Endothelial cell of umbilical vein (primary cell): ENCODE measurements at regions of chr2 and their contacts with region 1.

Region 1: GRCh38 chr2:15169326-15170069 is 391.6 kb downstream of the NBAS start:
- DNase-seq: peak; percentile 86
- H3K4me3 ChIP-seq: peak overlapping the region in 1 of 3 experiments; percentile 20
- H3K27ac ChIP-seq: peak overlapping the region; percentile 94
- H3K4me1 ChIP-seq: peaks cover 24% of the 10 kb centered on the region
- H3K27me3 ChIP-seq: no peaks in the 10 kb centered on the region
- CTCF ChIP-seq: no peak
- POLR2A ChIP-seq: no peak

Region 2: DNA sequence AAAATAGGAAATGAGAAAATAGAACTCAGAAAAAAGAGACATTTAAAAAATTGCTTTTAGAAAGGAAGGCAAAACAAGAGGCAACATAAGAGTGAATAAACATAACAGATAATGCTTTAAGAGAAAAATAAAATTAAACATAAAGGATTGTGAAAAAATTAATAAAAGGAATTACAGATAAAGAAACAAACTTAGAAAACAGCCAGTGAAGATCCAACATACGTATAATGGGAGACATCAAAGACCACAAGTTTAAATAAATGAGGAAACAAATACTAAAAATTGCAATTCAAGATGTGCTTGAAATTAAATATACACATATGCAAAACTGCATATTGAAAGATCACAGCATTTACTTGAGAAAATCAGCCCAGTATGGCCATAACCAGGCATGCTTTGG is 57.3 kb before region 1 on chr2:
- CTCF ChIA-PET with region 1: no interaction called
- POLR2A ChIA-PET with region 1: no interaction called
- dilution Hi-C with region 1: no loop called
- intact Hi-C with region 1: no loop called
- DNase-seq: peak; percentile 12
- H3K4me3 ChIP-seq: no peak overlapping the region
- H3K27ac ChIP-seq: no peak overlapping the region
- H3K4me1 ChIP-seq: no peaks in the 10 kb centered on the region
- H3K27me3 ChIP-seq: no peaks in the 10 kb centered on the region
- CTCF ChIP-seq: no peak
- POLR2A ChIP-seq: no peak

Region 3: GRCh38 chr2:15201009-15201408 is 31.5 kb after region 1 on chr2:
- CTCF ChIA-PET with region 1: no interaction called
- POLR2A ChIA-PET with region 1: no interaction called
- dilution Hi-C with region 1: no loop called
- intact Hi-C with region 1: no loop called
- DNase-seq: no peak
- H3K4me3 ChIP-seq: no peak overlapping the region
- H3K27ac ChIP-seq: no peak overlapping the region
- H3K4me1 ChIP-seq: no peaks in the 10 kb centered on the region
- H3K27me3 ChIP-seq: no peaks in the 10 kb centered on the region
- CTCF ChIP-seq: no peak
- POLR2A ChIP-seq: no peak

Region 4: DNA sequence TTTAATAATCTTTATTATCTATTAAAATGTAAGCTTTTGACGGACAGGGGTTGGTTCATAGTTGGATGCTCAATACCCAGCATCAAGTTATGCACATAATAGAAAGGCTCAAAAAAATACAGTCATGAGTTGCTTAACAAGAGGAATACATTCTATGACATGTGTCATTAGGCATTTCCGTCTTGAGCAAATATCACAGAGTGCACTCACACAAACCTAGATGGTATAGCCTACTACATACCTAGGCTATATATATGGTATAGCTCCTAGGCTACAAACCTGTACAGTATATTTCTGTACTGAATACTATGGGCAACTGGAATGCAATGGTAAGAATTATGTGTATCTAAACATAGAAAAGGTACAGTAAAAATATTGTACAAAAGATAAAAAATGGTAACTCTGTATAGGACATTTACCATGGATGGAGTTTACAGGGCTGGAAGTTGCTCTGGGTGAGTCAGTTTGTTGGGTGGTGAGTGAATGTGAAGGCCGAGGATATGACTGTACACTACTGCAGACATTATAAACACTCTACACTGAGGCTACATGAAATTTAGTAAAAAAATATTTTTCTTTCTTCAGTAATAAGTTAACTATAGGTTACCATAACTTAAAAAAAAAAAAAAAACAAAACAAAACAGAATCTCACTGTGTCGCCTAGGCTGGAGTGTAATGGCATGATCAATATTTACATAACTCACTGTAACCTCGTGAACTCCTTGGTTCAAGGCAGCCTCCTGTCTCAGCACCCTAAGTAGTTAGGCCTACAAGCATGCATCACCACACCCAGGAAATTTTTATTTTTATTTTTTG is 190.4 kb after region 1 on chr2:
- CTCF ChIA-PET with region 1: no interaction called
- POLR2A ChIA-PET with region 1: no interaction called
- dilution Hi-C with region 1: no loop called
- intact Hi-C with region 1: loop called (anchors 1 kb)
- DNase-seq: peak; percentile 89
- H3K4me3 ChIP-seq: no peak overlapping the region
- H3K27ac ChIP-seq: peak overlapping the region; percentile 79
- H3K4me1 ChIP-seq: peaks cover 22% of the 10 kb centered on the region
- H3K27me3 ChIP-seq: no peaks in the 10 kb centered on the region
- CTCF ChIP-seq: no peak
- POLR2A ChIP-seq: no peak

Region 5: GRCh38 chr2:15591692-15592463 is 422.4 kb after region 1 on chr2 and contains the start of gene DDX1:
- CTCF ChIA-PET with region 1: no interaction called
- POLR2A ChIA-PET with region 1: no interaction called
- dilution Hi-C with region 1: no loop called
- intact Hi-C with region 1: loop called (anchors 1 kb)
- DNase-seq: peak; percentile 82
- H3K4me3 ChIP-seq: peak within 1 kb of the TSS; percentile 74 to 99 (median 96)
- H3K27ac ChIP-seq: peak within 1 kb of the TSS; percentile 74
- H3K4me1 ChIP-seq: peaks cover 15% of the 10 kb centered on the region
- H3K27me3 ChIP-seq: no peaks in the 10 kb centered on the region
- CTCF ChIP-seq: no peak
- POLR2A ChIP-seq: peak; percentile 82
- total RNA-seq, gene DDX1: 117 and 124 TPM in 2 replicates

Region 6: GRCh38 chr2:15636972-15637785 is 467.7 kb after region 1 on chr2:
- CTCF ChIA-PET with region 1: no interaction called
- POLR2A ChIA-PET with region 1: no interaction called
- dilution Hi-C with region 1: no loop called
- intact Hi-C with region 1: no loop called
- DNase-seq: peak; percentile 85
- H3K4me3 ChIP-seq: no peak overlapping the region
- H3K27ac ChIP-seq: peak overlapping the region; percentile 2
- H3K4me1 ChIP-seq: peaks cover 62% of the 10 kb centered on the region
- H3K27me3 ChIP-seq: no peaks in the 10 kb centered on the region
- CTCF ChIP-seq: peak; percentile 75 to 95
- POLR2A ChIP-seq: no peak

Region 7: DNA sequence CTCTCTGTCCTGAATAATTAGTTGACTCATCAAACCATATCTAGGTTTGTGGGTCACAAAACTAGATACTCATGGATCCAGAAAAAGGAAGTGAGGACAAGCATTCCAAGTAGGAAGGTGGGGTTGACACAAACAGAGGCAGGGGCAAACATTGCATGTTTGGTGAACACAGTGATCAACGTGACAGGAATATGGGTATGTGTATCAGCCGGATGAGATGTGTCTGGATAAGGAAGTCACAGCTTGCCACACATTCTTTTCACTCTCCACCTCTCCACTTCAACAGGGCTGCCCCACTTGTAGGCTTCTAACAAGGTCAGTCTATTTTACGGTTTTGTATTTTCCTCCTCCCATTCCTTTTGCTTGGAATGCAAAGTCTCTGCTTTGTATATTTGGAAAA is 1177.2 kb after region 1 on chr2:
- CTCF ChIA-PET with region 1: no interaction called
- POLR2A ChIA-PET with region 1: no interaction called
- dilution Hi-C with region 1: no loop called
- intact Hi-C with region 1: no loop called
- DNase-seq: no peak
- H3K4me3 ChIP-seq: no peak overlapping the region
- H3K27ac ChIP-seq: no peak overlapping the region
- H3K4me1 ChIP-seq: no peaks in the 10 kb centered on the region
- H3K27me3 ChIP-seq: no peaks in the 10 kb centered on the region
- CTCF ChIP-seq: no peak
- POLR2A ChIP-seq: no peak